ENCODE measurements at regions of chr4 and their contacts with region 1.

Region 1: GRCh38 chr4:38160487-38161207 is 200.4 kb downstream of the PTTG2 start:
- DNase-seq: peak in 4 of 6 donors; percentile 38 to 82 (median 70)
- ATAC-seq: peak; percentile 73 to 85 (median 83)
- H3K4me3 ChIP-seq: no peak overlapping the region
- H3K27ac ChIP-seq: peak overlapping the region; percentile 81 to 95 (median 93)
- H3K4me1 ChIP-seq: peaks cover 39 to 53% (median 40%) of the 10 kb centered on the region in 3 donors
- H3K27me3 ChIP-seq: no peaks in the 10 kb centered on the region
- CTCF ChIP-seq: no peak

Region 2: GRCh38 chr4:38062088-38062893 is 98.4 kb before region 1 on chr4:
- intact Hi-C with region 1: loop called in 1 of 3 experiments (anchors 10 kb)
- DNase-seq: peak in 5 of 6 donors; percentile 70 to 83 (median 77)
- ATAC-seq: peak; percentile 81 to 97 (median 94)
- H3K4me3 ChIP-seq: peak overlapping the region in 2 of 4 donors; percentile 7 to 32
- H3K27ac ChIP-seq: peak overlapping the region in 2 of 4 donors; percentile 60 to 65
- H3K4me1 ChIP-seq: peaks cover 0 to 6% (median 0%) of the 10 kb centered on the region in 3 donors
- H3K27me3 ChIP-seq: no peaks in the 10 kb centered on the region
- CTCF ChIP-seq: peak; percentile 60 to 81 (median 78)

Region 3: GRCh38 chr4:38717604-38718003 is 557.0 kb after region 1 on chr4:
- intact Hi-C with region 1: no loop called
- DNase-seq: no peak
- ATAC-seq: no peak
- H3K4me3 ChIP-seq: no peak overlapping the region
- H3K27ac ChIP-seq: no peak overlapping the region
- H3K4me1 ChIP-seq: no peaks in the 10 kb centered on the region
- H3K27me3 ChIP-seq: no peaks in the 10 kb centered on the region
- CTCF ChIP-seq: no peak

Measured in pancreas (tissue), 10 donors.